Gastrocnemius medialis (tissue), 4 donors: ENCODE measurements at regions of chr3 and their contacts with region 1.

Region 1: DNA sequence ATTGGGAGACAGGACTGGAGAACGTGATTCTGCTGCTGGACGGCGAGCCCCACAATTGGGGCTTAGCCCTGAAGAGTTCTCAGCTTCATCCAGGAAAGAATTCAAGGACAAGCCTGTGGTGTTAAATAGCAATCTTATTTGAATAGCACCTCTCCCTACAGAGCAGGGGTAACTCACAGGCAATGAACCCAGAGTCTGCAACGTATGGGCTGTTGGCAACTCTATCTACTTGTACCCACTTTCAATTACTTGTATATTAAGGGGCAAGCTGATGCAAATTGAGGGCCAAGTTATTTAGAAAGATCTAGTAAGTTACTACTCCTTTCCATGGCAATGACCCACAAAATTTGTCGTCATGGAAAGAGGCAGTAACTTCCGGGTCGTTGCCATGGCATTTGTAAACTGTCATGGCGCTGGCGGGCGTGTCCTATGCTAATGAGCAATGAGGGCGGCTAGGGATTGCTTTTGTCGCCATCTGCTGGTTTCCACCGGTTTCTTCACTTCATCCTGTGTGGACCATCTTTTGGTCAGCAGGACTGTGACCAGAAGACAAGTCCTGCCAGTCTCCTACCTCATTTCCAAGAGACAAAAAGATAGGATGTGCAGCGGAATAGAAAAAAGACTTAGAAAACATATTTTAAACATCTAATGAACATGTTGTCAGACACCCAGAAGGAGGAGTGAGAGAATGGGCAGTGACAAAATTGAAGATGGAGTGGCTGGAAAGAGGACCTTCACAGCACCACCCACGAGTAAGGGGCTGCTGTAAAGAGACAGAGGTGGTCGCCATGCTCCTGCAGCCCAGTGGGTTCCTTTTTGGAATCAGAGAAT is 45.8 kb upstream of the SH3BP5 start:
- DNase-seq: peak; percentile 92 to 95
- ATAC-seq: peak; percentile 98 to 99
- H3K4me3 ChIP-seq: peak overlapping the region in 3 of 4 donors; percentile 24 to 37 (median 27)
- H3K27ac ChIP-seq: peak overlapping the region; percentile 57 to 74 (median 66)
- H3K4me1 ChIP-seq: peaks cover 0 to 4% of the 10 kb centered on the region in 2 donors
- H3K27me3 ChIP-seq: no peaks in the 10 kb centered on the region
- CTCF ChIP-seq: peak; percentile 88 to 94 (median 91)
- POLR2A ChIP-seq: no peak

Region 2: DNA sequence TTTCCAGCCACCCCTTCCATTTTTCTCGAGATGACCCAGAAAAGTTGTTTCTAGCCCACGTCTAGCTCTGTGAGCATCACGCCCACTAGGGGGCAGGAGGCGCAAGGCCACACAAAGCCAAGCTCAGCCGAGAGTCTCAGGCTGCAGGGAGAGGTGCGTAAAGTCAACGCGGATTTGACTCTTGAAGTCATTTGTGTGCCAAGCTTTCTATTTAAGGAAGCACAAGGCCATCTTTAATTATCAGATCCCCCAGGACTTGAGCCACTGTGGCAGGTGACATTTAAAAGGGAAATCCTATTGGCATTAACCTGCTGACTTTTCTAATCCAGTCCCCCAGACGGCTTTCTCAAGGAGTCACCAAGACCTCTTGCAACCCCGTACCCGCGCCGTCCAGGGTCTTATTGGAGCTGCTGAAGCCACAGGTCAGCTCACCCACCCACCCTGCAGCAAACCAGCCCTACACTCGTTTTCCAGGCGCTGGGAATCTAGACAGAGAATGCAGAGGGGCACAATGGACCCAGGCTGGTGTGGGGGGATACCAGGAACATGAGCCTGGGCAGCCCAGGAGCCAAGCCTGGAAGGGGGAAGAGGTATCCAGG is 110.0 kb before region 1 on chr3:
- in situ Hi-C with region 1: loop called (anchors 5 to 10 kb)
- intact Hi-C with region 1: loop called (anchors 1 kb)
- DNase-seq: peak; percentile 74 to 85
- ATAC-seq: peak; percentile 75 to 82
- H3K4me3 ChIP-seq: peak overlapping the region in 1 of 4 donors; percentile 1
- H3K27ac ChIP-seq: peak overlapping the region; percentile 73 to 81 (median 74)
- H3K4me1 ChIP-seq: peaks cover 46 to 57% of the 10 kb centered on the region in 2 donors
- H3K27me3 ChIP-seq: no peaks in the 10 kb centered on the region
- CTCF ChIP-seq: peak; percentile 94 to 97 (median 96)
- POLR2A ChIP-seq: no peak

Region 3: GRCh38 chr3:15309662-15310335 is 68.4 kb before region 1 on chr3:
- in situ Hi-C with region 1: no loop called
- intact Hi-C with region 1: no loop called
- DNase-seq: peak in 1 of 2 donors; percentile 9
- ATAC-seq: no peak
- H3K4me3 ChIP-seq: no peak overlapping the region
- H3K27ac ChIP-seq: peak overlapping the region in 1 of 4 donors; percentile 45
- H3K4me1 ChIP-seq: peaks cover 34 to 44% of the 10 kb centered on the region in 2 donors
- H3K27me3 ChIP-seq: no peaks in the 10 kb centered on the region
- CTCF ChIP-seq: no peak
- POLR2A ChIP-seq: no peak

Region 4: GRCh38 chr3:15332405-15333098 is 45.6 kb before region 1 on chr3 and contains the start of gene SH3BP5:
- in situ Hi-C with region 1: loop called in 3 of 4 experiments (anchors 5 to 10 kb)
- intact Hi-C with region 1: loop called (anchors 1 kb)
- DNase-seq: peak; percentile 52 to 66
- ATAC-seq: peak; percentile 63 to 66
- H3K4me3 ChIP-seq: peak within 1 kb of the TSS; percentile 92 to 97 (median 93)
- H3K27ac ChIP-seq: peak within 1 kb of the TSS; percentile 88 to 93 (median 91)
- H3K4me1 ChIP-seq: peaks cover 38 to 40% of the 10 kb centered on the region in 2 donors
- H3K27me3 ChIP-seq: no peaks in the 10 kb centered on the region
- CTCF ChIP-seq: peak; percentile 73 to 95 (median 91)
- POLR2A ChIP-seq: peak; percentile 89 to 91
- total RNA-seq, gene SH3BP5: 31.5 to 111 (median 75.5) TPM

Region 5: DNA sequence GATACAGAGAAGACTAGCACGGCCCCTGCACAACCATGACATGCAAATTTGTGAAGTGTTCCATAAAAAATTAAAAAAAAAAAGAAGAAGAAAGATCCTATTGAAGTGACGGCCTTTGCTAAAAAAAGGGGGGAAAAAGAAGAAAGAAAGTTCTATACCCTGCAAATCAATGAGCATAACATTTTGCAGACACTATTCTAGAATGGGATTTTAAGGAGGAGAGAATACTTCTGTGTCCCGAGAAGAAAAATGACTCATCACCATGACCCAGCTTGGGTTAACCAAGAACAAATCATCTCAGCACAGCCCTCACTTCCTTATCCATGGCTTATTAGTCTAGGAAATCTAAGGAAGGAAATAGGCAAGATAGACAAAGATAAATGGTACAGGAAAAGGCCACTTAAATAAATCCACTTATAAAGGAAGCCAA is 38.4 kb before region 1 on chr3:
- in situ Hi-C with region 1: loop called in 3 of 4 experiments (anchors 5 to 10 kb)
- intact Hi-C with region 1: loop called (anchors 2 kb)
- DNase-seq: no peak
- ATAC-seq: peak; percentile 55 to 64
- H3K4me3 ChIP-seq: no peak overlapping the region
- H3K27ac ChIP-seq: no peak overlapping the region
- H3K4me1 ChIP-seq: peaks cover 3 to 7% of the 10 kb centered on the region in 2 donors
- H3K27me3 ChIP-seq: no peaks in the 10 kb centered on the region
- CTCF ChIP-seq: no peak
- POLR2A ChIP-seq: no peak

Region 6: DNA sequence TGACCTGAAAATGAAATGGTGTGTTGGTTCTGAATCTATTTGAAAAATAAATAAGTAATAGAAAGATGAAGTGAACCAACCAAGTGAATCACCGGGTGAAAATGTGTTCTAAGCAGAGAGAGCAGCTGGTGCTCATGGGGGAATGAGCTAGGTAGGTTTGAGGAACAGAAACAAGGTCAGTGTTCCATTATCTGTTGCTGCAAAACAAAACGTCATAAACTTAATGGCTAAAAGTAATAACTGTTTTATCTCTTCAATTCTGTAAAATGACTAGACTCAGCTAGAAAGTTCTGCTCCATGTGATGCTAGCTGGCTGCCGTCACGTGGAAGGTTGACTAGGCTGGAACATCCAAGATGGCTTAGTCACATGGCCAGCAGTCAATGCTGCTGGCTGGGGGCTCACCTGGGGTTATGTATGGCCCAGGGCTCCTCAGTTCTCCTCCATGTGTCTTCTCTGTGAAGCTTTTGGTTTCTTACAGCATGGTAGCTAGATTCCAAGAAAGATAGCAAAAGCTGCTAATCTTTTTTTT is 32.5 kb before region 1 on chr3:
- in situ Hi-C with region 1: no loop called
- intact Hi-C with region 1: loop called (anchors 2 kb)
- DNase-seq: no peak
- ATAC-seq: peak; percentile 60 to 66
- H3K4me3 ChIP-seq: no peak overlapping the region
- H3K27ac ChIP-seq: peak overlapping the region; percentile 67 to 84 (median 76)
- H3K4me1 ChIP-seq: peaks cover 13 to 19% of the 10 kb centered on the region in 2 donors
- H3K27me3 ChIP-seq: no peaks in the 10 kb centered on the region
- CTCF ChIP-seq: no peak
- POLR2A ChIP-seq: no peak